MCF 10A (cell line): ENCODE measurements at regions of chr13 and their contacts with region 1.

Region 1: GRCh38 chr13:21297914-21298831 is 121.7 kb downstream of the MRPL57 start:
- DNase-seq: peak; percentile 91
- H3K4me3 Mint-ChIP-seq: peak overlapping the region; percentile 88
- H3K27ac Mint-ChIP-seq: peak overlapping the region; percentile 82
- H3K4me1 Mint-ChIP-seq: peaks cover 7% of the 10 kb centered on the region
- H3K27me3 Mint-ChIP-seq: no peaks in the 10 kb centered on the region
- CTCF ChIP-seq: peak; percentile 83

Region 2: DNA sequence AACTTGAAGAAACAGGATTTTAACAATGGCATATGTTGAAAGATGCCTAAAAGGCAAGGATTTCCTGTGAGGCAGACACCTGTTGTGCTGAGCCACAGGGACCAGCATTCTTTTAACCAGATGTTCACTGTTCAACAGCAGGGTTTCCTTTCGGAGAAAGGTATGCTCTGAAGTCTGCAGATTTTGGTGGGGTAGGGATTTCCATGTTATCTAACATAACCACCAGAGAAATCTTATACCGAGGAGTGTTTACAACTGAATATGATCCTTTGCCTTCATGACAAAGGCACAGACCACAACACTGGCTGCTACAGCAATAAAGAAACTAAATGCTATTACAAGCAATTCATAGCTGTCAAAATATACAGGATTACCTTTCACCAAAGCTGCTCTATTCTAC is 1616.7 kb before region 1 on chr13:
- CTCF ChIA-PET with region 1: no interaction called
- POLR2A ChIA-PET with region 1: no interaction called
- intact Hi-C with region 1: no loop called
- DNase-seq: no peak
- H3K4me3 Mint-ChIP-seq: no peak overlapping the region
- H3K27ac Mint-ChIP-seq: no peak overlapping the region
- H3K4me1 Mint-ChIP-seq: no peaks in the 10 kb centered on the region
- H3K27me3 Mint-ChIP-seq: no peaks in the 10 kb centered on the region
- CTCF ChIP-seq: no peak

Region 3: DNA sequence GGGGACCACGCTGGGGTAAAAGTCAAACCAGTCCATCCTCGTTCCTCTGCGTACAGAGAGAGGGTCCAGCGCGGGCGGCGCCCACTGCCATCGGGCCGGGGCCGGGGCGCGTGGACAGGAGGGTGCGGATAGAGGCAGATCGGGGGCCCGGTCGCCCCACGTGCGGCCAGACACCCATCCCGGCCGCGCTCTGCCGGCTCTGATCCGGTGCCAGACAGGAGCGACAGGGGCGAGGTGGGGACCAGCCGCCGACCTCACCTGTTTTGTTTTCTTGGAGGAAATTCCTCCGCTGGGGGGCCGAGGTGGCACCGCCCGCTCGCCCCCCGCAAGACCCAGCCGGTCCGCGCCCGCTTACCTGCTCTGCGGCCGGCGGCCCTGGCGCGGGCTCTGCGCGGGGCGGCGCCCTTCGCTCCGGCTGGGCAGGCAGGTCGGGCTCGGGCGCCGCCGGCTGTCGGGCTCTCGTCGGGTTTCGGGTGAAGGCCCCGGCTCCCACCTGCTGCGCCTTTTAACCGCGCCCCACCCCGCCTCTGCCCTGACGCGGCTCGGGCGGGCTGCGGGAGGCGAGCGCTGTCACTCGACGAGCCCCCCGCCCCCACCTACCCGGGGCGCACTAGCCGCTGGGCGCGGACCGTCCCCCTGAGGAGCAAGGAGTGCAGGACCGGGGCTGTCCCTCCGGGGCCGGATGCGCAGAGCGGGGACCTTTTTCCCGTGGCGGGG is 1066.2 kb before region 1 on chr13 and contains the start of gene GJB6:
- CTCF ChIA-PET with region 1: no interaction called
- POLR2A ChIA-PET with region 1: no interaction called
- intact Hi-C with region 1: no loop called
- DNase-seq: no peak
- H3K4me3 Mint-ChIP-seq: no peak within 1 kb of the TSS
- H3K27ac Mint-ChIP-seq: no peak within 1 kb of the TSS
- H3K4me1 Mint-ChIP-seq: no peaks in the 10 kb centered on the region
- H3K27me3 Mint-ChIP-seq: no peaks in the 10 kb centered on the region
- CTCF ChIP-seq: no peak
- total RNA-seq, gene GJB6: not detected in 2 replicates

Region 4: GRCh38 chr13:21176220-21176982 is 121.8 kb before region 1 on chr13 and contains the starts of genes MRPL57 and SKA3:
- CTCF ChIA-PET with region 1: interaction called, 15 read pairs
- POLR2A ChIA-PET with region 1: interaction called, 21 read pairs
- intact Hi-C with region 1: loop called (anchors 5 kb)
- DNase-seq: peak; percentile 92
- H3K4me3 Mint-ChIP-seq: peak within 1 kb of the TSS; percentile 99
- H3K27ac Mint-ChIP-seq: peak within 1 kb of the TSS; percentile 90
- H3K4me1 Mint-ChIP-seq: no peaks in the 10 kb centered on the region
- H3K27me3 Mint-ChIP-seq: no peaks in the 10 kb centered on the region
- CTCF ChIP-seq: no peak
- total RNA-seq, gene MRPL57: 16.8 and 20.8 TPM in 2 replicates
- total RNA-seq, gene SKA3: 5.9 and 16.4 TPM in 2 replicates

Region 5: GRCh38 chr13:21310221-21310620 is 12.0 kb after region 1 on chr13:
- CTCF ChIA-PET with region 1: interaction called, 52 read pairs
- POLR2A ChIA-PET with region 1: interaction called, 41 read pairs
- intact Hi-C with region 1: no loop called
- DNase-seq: peak; percentile 92
- H3K4me3 Mint-ChIP-seq: no peak overlapping the region
- H3K27ac Mint-ChIP-seq: peak overlapping the region; percentile 55
- H3K4me1 Mint-ChIP-seq: peaks cover 10% of the 10 kb centered on the region
- H3K27me3 Mint-ChIP-seq: no peaks in the 10 kb centered on the region
- CTCF ChIP-seq: no peak

Region 6: GRCh38 chr13:21435710-21436151 is 137.6 kb after region 1 on chr13:
- CTCF ChIA-PET with region 1: interaction called, 3 read pairs
- POLR2A ChIA-PET with region 1: interaction called, 10 read pairs
- intact Hi-C with region 1: no loop called
- DNase-seq: peak; percentile 86
- H3K4me3 Mint-ChIP-seq: peak overlapping the region; percentile 59
- H3K27ac Mint-ChIP-seq: peak overlapping the region; percentile 50
- H3K4me1 Mint-ChIP-seq: peaks cover 29% of the 10 kb centered on the region
- H3K27me3 Mint-ChIP-seq: no peaks in the 10 kb centered on the region
- CTCF ChIP-seq: no peak